ENCODE measurements at regions of chr17 and their contacts with region 1.

Region 1: GRCh38 chr17:27552469-27552779 is 78.6 kb upstream of the LGALS9 start:
- DNase-seq: peak; percentile 69 to 83
- H3K4me3 ChIP-seq: no peak overlapping the region
- H3K4me3 Mint-ChIP-seq: peak overlapping the region; percentile 18
- H3K27ac Mint-ChIP-seq: peak overlapping the region; percentile 86
- H3K4me1 ChIP-seq: peaks cover 47% of the 10 kb centered on the region
- H3K4me1 Mint-ChIP-seq: peaks cover 39% of the 10 kb centered on the region
- H3K27me3 ChIP-seq: no peaks in the 10 kb centered on the region
- H3K27me3 Mint-ChIP-seq: no peaks in the 10 kb centered on the region
- CTCF ChIP-seq: no peak

Region 2: GRCh38 chr17:27532269-27533263 is 19.9 kb before region 1 on chr17:
- CTCF ChIA-PET with region 1: interaction called, 8 read pairs
- POLR2A ChIA-PET with region 1: no interaction called
- intact Hi-C with region 1: loop called (anchors 1 kb)
- DNase-seq: peak; percentile 78 to 85
- H3K4me3 ChIP-seq: no peak overlapping the region
- H3K4me3 Mint-ChIP-seq: peak overlapping the region; percentile 15
- H3K27ac Mint-ChIP-seq: peak overlapping the region; percentile 90
- H3K4me1 ChIP-seq: peaks cover 65% of the 10 kb centered on the region
- H3K4me1 Mint-ChIP-seq: peaks cover 75% of the 10 kb centered on the region
- H3K27me3 ChIP-seq: no peaks in the 10 kb centered on the region
- H3K27me3 Mint-ChIP-seq: no peaks in the 10 kb centered on the region
- CTCF ChIP-seq: no peak